ENCODE measurements at regions of chr1 and their contacts with region 1.

Region 1: GRCh38 chr1:100423832-100424337 is 71.6 kb downstream of the CDC14A start:
- DNase-seq: peak; percentile 54 to 65 (median 61)
- H3K4me3 ChIP-seq: peak overlapping the region; percentile 45 to 66
- H3K4me3 Mint-ChIP-seq: peak overlapping the region; percentile 89 to 100 (median 94)
- H3K27ac ChIP-seq: peak overlapping the region; percentile 68
- H3K27ac Mint-ChIP-seq: peak overlapping the region; percentile 90 to 99 (median 97)
- H3K4me1 ChIP-seq: peaks cover 80% of the 10 kb centered on the region
- H3K4me1 Mint-ChIP-seq: peaks cover 52 to 84% (median 63%) of the 10 kb centered on the region in 4 donors
- H3K27me3 ChIP-seq: no peaks in the 10 kb centered on the region
- H3K27me3 Mint-ChIP-seq: no peaks in the 10 kb centered on the region

Region 2: DNA sequence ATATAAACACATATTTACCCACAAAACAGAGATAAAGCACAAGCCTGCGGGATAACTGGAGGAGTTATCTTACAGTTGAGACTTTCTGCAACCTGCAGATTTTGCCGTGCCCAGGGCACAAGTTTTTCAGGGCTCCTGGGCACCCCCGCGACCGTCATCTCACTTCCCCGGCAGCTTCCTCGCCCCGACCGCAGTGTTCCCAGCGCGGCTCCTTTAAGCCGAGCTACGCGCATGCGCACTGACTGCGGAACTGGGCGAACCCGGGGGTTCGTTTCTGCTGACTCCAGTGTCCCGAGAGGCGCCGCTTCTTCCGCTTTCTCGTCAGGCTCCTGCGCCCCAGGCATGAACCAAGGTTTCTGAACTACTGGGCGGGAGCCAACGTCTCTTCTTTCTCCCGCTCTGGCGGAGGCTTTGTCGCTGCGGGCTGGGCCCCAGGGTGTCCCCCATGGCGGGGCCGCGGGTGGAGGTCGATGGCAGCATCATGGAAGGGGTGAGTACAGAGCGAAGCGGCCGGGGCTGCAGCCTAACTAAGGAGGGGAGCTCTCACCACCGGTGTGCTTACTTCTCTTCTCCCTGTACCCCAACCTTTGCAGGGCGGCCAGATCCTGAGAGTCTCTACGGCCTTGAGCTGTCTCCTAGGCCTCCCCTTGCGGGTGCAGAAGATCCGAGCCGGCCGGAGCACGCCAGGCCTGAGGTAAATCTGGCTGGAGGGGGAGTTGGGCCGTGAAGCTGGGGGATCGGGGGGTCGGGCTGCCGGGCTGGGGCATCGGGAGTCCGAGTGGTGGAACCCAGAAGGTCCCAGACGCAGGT is 157.7 kb before region 1 on chr1 and contains the start of gene RTCA:
- CTCF ChIA-PET with region 1: interaction called, 3 read pairs
- POLR2A ChIA-PET with region 1: interaction called, 20 read pairs
- intact Hi-C with region 1: no loop called
- DNase-seq: peak; percentile 93 to 97 (median 94)
- H3K4me3 ChIP-seq: peak within 1 kb of the TSS; percentile 77
- H3K4me3 Mint-ChIP-seq: peak within 1 kb of the TSS; percentile 99 to 100 (median 100)
- H3K27ac ChIP-seq: peak within 1 kb of the TSS; percentile 78
- H3K27ac Mint-ChIP-seq: peak within 1 kb of the TSS; percentile 96 to 99 (median 98)
- H3K4me1 ChIP-seq: peaks cover 44% of the 10 kb centered on the region
- H3K4me1 Mint-ChIP-seq: peaks cover 19 to 58% (median 39%) of the 10 kb centered on the region in 4 donors
- H3K27me3 ChIP-seq: no peaks in the 10 kb centered on the region
- H3K27me3 Mint-ChIP-seq: no peaks in the 10 kb centered on the region
- total RNA-seq, gene RTCA: 39.7 to 41.4 TPM

Region 3: GRCh38 chr1:100358210-100358609 is 65.7 kb before region 1 on chr1:
- CTCF ChIA-PET with region 1: interaction called, 32 read pairs
- POLR2A ChIA-PET with region 1: interaction called, 175 read pairs
- intact Hi-C with region 1: loop called (anchors 2 kb)
- DNase-seq: no peak
- H3K4me3 ChIP-seq: no peak overlapping the region
- H3K4me3 Mint-ChIP-seq: peak overlapping the region; percentile 53 to 100 (median 96)
- H3K27ac ChIP-seq: no peak overlapping the region
- H3K27ac Mint-ChIP-seq: peak overlapping the region; percentile 5 to 97 (median 66)
- H3K4me1 ChIP-seq: peaks cover 85% of the 10 kb centered on the region
- H3K4me1 Mint-ChIP-seq: peaks cover 63 to 98% (median 79%) of the 10 kb centered on the region in 4 donors
- H3K27me3 ChIP-seq: no peaks in the 10 kb centered on the region
- H3K27me3 Mint-ChIP-seq: no peaks in the 10 kb centered on the region

Region 4: GRCh38 chr1:100387209-100387608 is 36.7 kb before region 1 on chr1:
- CTCF ChIA-PET with region 1: interaction called, 11 read pairs
- POLR2A ChIA-PET with region 1: interaction called, 33 read pairs
- intact Hi-C with region 1: no loop called
- DNase-seq: no peak
- H3K4me3 ChIP-seq: no peak overlapping the region
- H3K4me3 Mint-ChIP-seq: peak overlapping the region; percentile 67 to 80 (median 73)
- H3K27ac ChIP-seq: peak overlapping the region; percentile 65
- H3K27ac Mint-ChIP-seq: peak overlapping the region; percentile 89 to 95 (median 93)
- H3K4me1 ChIP-seq: peaks cover 98% of the 10 kb centered on the region
- H3K4me1 Mint-ChIP-seq: peaks cover 69 to 98% (median 87%) of the 10 kb centered on the region in 4 donors
- H3K27me3 ChIP-seq: no peaks in the 10 kb centered on the region
- H3K27me3 Mint-ChIP-seq: no peaks in the 10 kb centered on the region

Region 5: GRCh38 chr1:100400404-100400803 is 23.5 kb before region 1 on chr1:
- CTCF ChIA-PET with region 1: interaction called, 41 read pairs
- POLR2A ChIA-PET with region 1: interaction called, 81 read pairs
- intact Hi-C with region 1: no loop called
- DNase-seq: peak; percentile 78 to 90 (median 86)
- H3K4me3 ChIP-seq: peak overlapping the region in 1 of 2 donors; percentile 25
- H3K4me3 Mint-ChIP-seq: peak overlapping the region; percentile 74 to 85 (median 82)
- H3K27ac ChIP-seq: peak overlapping the region; percentile 55
- H3K27ac Mint-ChIP-seq: peak overlapping the region; percentile 89 to 95 (median 92)
- H3K4me1 ChIP-seq: peaks cover 100% of the 10 kb centered on the region
- H3K4me1 Mint-ChIP-seq: peaks cover 66 to 92% (median 80%) of the 10 kb centered on the region in 4 donors
- H3K27me3 ChIP-seq: no peaks in the 10 kb centered on the region
- H3K27me3 Mint-ChIP-seq: no peaks in the 10 kb centered on the region

Region 6: GRCh38 chr1:100443811-100444571 is 20.1 kb after region 1 on chr1:
- CTCF ChIA-PET with region 1: interaction called, 22 read pairs
- POLR2A ChIA-PET with region 1: interaction called, 272 read pairs
- intact Hi-C with region 1: loop called (anchors 1 kb)
- DNase-seq: peak; percentile 52 to 69 (median 61)
- H3K4me3 ChIP-seq: peak overlapping the region; percentile 8 to 26
- H3K4me3 Mint-ChIP-seq: peak overlapping the region; percentile 74 to 91 (median 80)
- H3K27ac ChIP-seq: peak overlapping the region; percentile 96
- H3K27ac Mint-ChIP-seq: peak overlapping the region; percentile 98 to 100 (median 99)
- H3K4me1 ChIP-seq: peaks cover 99% of the 10 kb centered on the region
- H3K4me1 Mint-ChIP-seq: peaks cover 65 to 93% (median 75%) of the 10 kb centered on the region in 4 donors
- H3K27me3 ChIP-seq: no peaks in the 10 kb centered on the region
- H3K27me3 Mint-ChIP-seq: no peaks in the 10 kb centered on the region

Region 7: DNA sequence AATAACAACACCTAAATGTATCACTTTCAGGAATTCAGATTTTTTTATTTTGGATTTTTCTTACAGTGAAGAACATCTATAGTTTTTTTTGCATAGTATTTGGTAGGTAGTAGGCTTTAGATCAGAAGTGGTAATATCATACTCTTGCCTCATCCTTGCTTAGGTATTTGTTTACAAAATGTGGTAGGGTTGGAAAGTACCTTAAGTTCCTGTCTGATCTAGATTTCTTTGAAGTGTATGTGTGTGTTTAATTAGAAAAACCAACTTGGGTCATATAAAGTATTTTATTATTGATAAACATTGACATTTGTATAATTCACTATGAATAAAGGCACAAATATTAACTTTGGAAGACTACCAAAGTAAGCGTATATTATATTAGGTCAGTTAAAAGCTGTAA is 28.8 kb after region 1 on chr1:
- CTCF ChIA-PET with region 1: interaction called, 85 read pairs
- POLR2A ChIA-PET with region 1: interaction called, 272 read pairs
- intact Hi-C with region 1: loop called (anchors 1 kb)
- DNase-seq: peak in 4 of 5 donors; percentile 73 to 86 (median 80)
- H3K4me3 ChIP-seq: no peak overlapping the region
- H3K4me3 Mint-ChIP-seq: peak overlapping the region in 7 of 8 donors; percentile 32 to 83 (median 58)
- H3K27ac ChIP-seq: peak overlapping the region; percentile 78
- H3K27ac Mint-ChIP-seq: peak overlapping the region; percentile 89 to 100 (median 98)
- H3K4me1 ChIP-seq: peaks cover 100% of the 10 kb centered on the region
- H3K4me1 Mint-ChIP-seq: peaks cover 58 to 93% (median 76%) of the 10 kb centered on the region in 4 donors
- H3K27me3 ChIP-seq: no peaks in the 10 kb centered on the region
- H3K27me3 Mint-ChIP-seq: no peaks in the 10 kb centered on the region

Region 8: DNA sequence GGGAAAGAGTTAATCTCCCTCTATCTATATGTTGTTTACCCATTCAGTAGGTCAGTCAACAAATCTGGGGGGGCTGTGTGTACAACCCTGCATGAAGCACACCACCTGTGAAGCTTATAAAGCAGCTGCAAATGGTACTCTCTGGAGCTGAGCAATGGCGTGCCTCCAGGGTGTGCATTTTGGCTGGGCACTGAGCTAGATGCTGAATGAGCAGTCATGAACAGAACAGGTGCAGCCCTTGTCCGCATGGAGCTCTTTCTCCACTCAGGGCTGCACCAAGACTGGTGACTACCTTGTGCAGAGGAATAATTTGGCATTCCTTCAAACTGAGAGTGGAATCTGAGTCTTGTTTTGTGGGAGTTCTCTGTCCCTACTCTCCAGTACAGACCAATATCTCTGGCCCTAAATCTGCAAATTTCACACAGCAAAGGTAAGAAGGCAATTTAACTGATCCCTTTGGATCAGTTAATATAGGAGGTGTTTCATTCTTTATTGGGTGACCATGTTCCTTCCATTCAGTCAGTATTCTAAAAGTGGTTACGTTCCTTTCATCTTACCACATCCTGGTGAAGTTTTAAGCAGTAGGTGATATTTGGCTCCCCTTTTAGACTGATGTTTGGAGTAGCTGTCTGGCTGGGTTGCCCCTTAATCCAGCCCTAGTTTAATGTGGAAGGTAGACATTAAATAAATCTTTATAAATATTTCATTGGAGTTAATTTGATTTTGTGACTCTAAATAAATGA is 190.1 kb after region 1 on chr1:
- CTCF ChIA-PET with region 1: no interaction called
- POLR2A ChIA-PET with region 1: no interaction called
- intact Hi-C with region 1: no loop called
- DNase-seq: peak in 4 of 5 donors; percentile 5 to 32 (median 15)
- H3K4me3 ChIP-seq: no peak overlapping the region
- H3K4me3 Mint-ChIP-seq: peak overlapping the region in 5 of 8 donors; percentile 1 to 70 (median 54)
- H3K27ac ChIP-seq: no peak overlapping the region
- H3K27ac Mint-ChIP-seq: peak overlapping the region in 1 of 7 donors; percentile 45
- H3K4me1 ChIP-seq: peaks cover 16% of the 10 kb centered on the region
- H3K4me1 Mint-ChIP-seq: peaks cover 10 to 18% (median 15%) of the 10 kb centered on the region in 4 donors
- H3K27me3 ChIP-seq: no peaks in the 10 kb centered on the region
- H3K27me3 Mint-ChIP-seq: peaks cover 2 to 3% of the 10 kb centered on the region in 2 donors